ENCODE measurements at regions of chr6 and their contacts with region 1.

Region 1: DNA sequence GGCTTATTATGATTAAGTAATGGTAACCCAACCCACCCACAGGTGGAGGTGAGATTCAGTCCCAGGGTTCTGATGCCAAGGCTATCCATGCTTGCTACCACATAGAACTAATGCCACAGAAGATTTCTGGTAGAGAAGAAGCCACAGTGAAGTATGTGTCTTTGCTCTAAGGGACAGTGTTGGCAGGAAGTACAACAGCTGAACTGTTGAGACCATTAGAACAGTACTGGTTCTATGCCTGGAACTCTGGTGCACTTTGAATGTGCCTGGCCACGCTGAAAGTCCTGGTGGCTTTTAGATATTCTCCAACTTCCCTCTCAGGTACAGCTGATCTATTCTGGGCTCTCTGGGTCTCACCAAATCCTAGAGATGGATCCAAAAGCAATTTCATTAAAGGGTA is 7.8 kb downstream of the STX7 start:
- DNase-seq: no peak
- H3K4me3 ChIP-seq: no peak overlapping the region
- H3K27ac ChIP-seq: peak overlapping the region; percentile 68
- H3K4me1 ChIP-seq: peaks cover 24% of the 10 kb centered on the region
- H3K27me3 ChIP-seq: no peaks in the 10 kb centered on the region
- CTCF ChIP-seq: no peak
- POLR2A ChIP-seq: no peak

Region 2: GRCh38 chr6:132490024-132490423 is 15.1 kb before region 1 on chr6:
- CTCF ChIA-PET with region 1: interaction called, 5 read pairs
- POLR2A ChIA-PET with region 1: no interaction called
- dilution Hi-C with region 1: no loop called
- intact Hi-C with region 1: loop called (anchors 2 kb)
- DNase-seq: peak; percentile 53
- H3K4me3 ChIP-seq: no peak overlapping the region
- H3K27ac ChIP-seq: peak overlapping the region; percentile 4
- H3K4me1 ChIP-seq: peaks cover 23% of the 10 kb centered on the region
- H3K27me3 ChIP-seq: no peaks in the 10 kb centered on the region
- CTCF ChIP-seq: no peak
- POLR2A ChIP-seq: no peak

Measured in endothelial cell of umbilical vein (primary cell).